ENCODE measurements at regions of chr2 and their contacts with region 1.

Region 1: GRCh38 chr2:71299507-71299906 is 32.1 kb upstream of the ZNF638 start:
- DNase-seq: no peak
- ATAC-seq: no peak
- H3K4me3 ChIP-seq: no peak overlapping the region
- H3K27ac ChIP-seq: no peak overlapping the region
- H3K4me1 ChIP-seq: no peaks in the 10 kb centered on the region
- H3K27me3 ChIP-seq: no peaks in the 10 kb centered on the region

Region 2: DNA sequence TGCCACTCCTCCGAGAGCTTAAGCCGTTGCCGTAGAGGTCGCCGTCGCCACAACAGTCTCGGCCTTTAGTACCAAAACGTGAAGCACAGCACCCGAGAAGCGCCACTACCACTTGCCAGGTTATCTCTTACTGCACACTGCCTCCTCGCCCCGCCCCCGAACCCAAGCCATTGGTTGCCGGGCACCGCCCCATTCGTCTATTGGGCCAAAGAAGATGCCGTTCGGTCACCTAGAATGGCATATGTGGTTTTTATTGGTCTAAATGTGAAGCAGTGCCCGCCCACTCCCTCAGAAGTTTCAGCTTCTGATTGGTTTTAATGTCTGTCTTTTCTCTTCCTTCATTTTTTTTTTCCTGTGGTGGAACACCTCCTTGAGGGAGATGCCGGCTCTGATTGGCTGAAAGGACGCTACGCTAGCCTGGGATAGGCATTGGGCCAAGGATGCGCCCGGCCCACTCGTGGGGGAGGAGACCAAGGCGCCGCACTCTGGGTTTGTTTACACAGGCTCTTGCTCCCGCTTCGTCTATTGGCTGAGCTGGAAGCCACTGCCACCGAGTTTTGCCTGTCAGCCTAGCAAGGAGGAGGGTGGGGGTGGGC is 72.4 kb before region 1 on chr2 and contains the start of gene PAIP2B:
- intact Hi-C with region 1: no loop called
- DNase-seq: peak; percentile 99 to 100 (median 99)
- ATAC-seq: peak; percentile 98
- H3K4me3 ChIP-seq: peak within 1 kb of the TSS; percentile 89
- H3K27ac ChIP-seq: peak within 1 kb of the TSS; percentile 89
- H3K4me1 ChIP-seq: no peaks in the 10 kb centered on the region
- H3K27me3 ChIP-seq: no peaks in the 10 kb centered on the region
- total RNA-seq, gene PAIP2B: 21.5 to 34.5 (median 30.9) TPM

Region 3: DNA sequence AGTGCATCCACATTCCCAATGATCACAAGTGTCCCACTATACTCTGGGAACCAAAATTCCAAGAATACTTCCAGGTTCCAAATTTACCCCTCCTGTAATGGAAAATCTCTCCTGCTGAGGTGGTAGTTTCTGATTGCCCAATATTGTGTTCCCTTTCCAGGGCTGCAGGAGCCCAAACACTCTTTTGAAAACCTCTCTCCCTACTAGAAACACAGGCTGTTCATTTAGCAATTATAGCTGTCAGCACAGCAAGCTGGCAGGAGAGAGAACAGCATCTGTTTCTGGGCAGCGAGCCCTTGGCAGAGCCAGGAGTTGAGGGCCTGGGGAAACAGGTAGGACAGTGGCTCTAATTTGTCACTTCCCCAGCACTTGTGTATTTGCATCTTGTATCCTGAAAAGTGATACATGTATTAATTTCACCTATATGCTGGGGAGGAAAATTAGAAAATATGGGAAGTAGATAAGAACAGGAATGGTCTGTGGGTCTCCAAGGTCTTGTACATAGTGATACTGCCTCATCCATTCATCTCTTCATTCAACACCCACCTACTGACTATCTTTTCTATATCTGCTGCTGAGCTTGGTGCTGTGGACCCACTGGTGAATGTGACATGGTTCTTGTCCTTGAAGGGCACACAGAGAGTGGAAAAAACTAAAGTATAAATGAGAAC is 55.7 kb before region 1 on chr2:
- intact Hi-C with region 1: no loop called
- DNase-seq: peak; percentile 50 to 78 (median 73)
- ATAC-seq: peak; percentile 91
- H3K4me3 ChIP-seq: no peak overlapping the region
- H3K27ac ChIP-seq: peak overlapping the region; percentile 70
- H3K4me1 ChIP-seq: peaks cover 8% of the 10 kb centered on the region
- H3K27me3 ChIP-seq: no peaks in the 10 kb centered on the region

Region 4: DNA sequence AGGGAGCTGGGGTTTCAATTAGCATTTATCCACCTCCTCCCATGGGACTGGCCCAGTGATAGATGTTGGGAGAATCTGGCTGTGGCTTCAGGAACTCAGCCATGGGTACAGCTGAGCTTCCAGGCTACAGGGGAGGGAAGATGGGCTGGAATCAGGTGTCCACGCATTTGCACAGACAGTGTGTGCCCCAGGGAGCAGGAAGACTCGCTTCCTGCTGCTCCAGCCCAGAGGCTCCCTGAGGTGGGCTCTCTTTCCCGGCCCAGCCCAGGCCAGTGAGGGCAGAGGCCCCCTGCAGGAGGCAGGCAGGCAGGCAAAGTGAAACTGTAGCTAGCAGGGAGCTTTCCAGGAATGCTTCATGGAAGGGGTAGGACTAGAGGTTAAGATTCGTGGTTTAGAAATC is 182.5 kb after region 1 on chr2:
- intact Hi-C with region 1: no loop called
- DNase-seq: no peak
- ATAC-seq: no peak
- H3K4me3 ChIP-seq: no peak overlapping the region
- H3K27ac ChIP-seq: no peak overlapping the region
- H3K4me1 ChIP-seq: no peaks in the 10 kb centered on the region
- H3K27me3 ChIP-seq: no peaks in the 10 kb centered on the region

Region 5: DNA sequence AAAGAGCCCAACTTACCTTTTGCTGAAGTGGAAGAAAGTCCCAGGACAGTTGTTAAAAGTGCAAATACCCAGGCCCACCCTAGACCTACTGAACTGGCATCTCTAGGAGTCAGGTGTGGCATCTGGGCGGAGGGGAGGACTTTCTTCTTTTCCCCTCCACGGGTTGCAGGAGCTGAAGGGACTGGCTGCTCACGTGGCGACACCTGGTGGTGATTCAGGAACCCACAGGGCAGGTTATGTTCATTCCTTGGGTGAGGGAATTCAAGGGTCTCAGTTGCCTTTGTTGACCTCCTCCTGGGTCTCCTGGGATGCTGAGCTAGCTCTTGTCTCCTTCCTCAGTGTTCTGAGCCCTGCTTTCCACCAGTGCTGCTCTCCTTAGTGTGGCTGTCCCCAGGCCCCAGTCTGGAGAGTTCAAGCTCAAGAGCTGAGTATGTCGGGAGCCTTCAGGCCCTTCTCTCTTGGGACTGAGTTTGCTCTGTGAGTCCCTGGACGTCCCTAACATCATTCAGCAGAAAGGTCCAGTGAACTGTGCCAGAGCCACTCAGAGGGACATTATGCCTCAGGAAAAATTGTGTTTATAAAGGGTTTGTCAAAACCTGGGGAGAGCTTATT is 210.8 kb after region 1 on chr2:
- intact Hi-C with region 1: loop called (anchors 5 kb)
- DNase-seq: peak; percentile 69 to 85 (median 84)
- ATAC-seq: peak; percentile 26 to 52
- H3K4me3 ChIP-seq: no peak overlapping the region
- H3K27ac ChIP-seq: no peak overlapping the region
- H3K4me1 ChIP-seq: peaks cover 3% of the 10 kb centered on the region
- H3K27me3 ChIP-seq: no peaks in the 10 kb centered on the region

Measured in right cardiac atrium (tissue), 5 donors.